ENCODE measurements at regions of chr11 and their contacts with region 1.

Region 1: GRCh38 chr11:13861411-13861810 is 101.1 kb upstream of the SPON1 start:
- DNase-seq: peak; percentile 97
- H3K4me3 ChIP-seq: peak overlapping the region; percentile 35
- H3K27ac ChIP-seq: peak overlapping the region; percentile 89
- H3K4me1 ChIP-seq: peaks cover 77% of the 10 kb centered on the region
- CTCF ChIP-seq: no peak

Region 2: DNA sequence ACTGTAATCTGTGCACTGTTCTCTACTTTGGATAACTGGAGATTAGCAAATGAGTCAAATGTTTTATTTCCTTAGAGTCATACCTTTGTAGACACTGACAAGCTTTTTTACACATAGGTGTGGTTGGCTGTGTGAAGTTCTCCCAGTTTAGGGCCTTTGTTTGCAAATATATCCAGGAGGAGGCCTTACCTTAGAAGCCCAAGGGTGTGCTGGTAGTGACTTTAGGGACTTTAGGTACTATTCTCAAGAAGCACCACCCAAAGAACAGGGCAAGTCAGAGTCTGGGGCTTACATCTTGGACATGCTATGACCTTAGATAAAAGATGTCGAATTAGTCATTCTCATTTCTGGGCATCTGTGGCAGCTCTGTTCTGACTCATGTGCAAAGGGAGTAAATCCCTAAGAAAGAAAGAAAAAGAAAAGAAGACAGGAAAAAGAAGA is 197.8 kb before region 1 on chr11:
- CTCF ChIA-PET with region 1: no interaction called
- POLR2A ChIA-PET with region 1: no interaction called
- intact Hi-C with region 1: no loop called
- DNase-seq: no peak
- H3K4me3 ChIP-seq: no peak overlapping the region
- H3K27ac ChIP-seq: no peak overlapping the region
- H3K4me1 ChIP-seq: peaks cover 14% of the 10 kb centered on the region
- CTCF ChIP-seq: no peak

Region 3: DNA sequence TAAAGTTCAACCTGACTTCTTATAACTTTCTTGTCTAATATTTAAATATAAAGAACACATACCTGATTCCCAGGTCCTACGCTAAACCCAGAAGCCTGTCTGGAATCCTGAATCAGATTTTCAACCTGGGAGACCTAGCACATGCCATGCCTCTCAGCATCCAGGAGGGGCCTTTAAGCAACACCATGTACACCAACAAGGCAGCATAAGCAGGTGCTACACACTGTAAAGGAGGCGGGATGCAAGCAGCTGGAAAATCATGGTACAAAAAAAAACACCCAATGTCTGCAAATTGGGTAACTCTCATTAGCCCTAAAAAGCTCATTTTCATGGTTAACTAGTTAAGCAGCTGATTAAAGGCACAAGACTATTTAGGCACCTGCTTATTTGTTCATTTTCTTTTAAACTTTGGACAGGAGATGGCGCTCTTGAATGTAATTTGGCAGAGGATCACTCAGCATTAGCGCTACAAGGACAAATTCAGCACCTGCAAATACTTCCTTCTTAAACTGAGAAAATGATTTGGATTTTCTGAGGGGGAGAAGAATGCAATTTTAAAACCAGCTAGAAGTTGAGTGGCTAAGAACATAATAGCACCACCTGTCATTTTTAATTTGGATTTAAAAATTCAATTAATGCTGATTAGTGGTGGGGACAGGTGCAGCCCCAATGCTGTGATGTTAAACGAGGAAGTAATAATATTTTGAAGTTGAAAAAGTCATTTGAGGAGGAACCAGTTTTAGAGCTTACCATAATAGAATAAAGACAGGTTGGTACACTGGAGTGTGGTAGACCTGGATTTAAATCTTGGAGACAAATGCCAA is 89.0 kb before region 1 on chr11:
- CTCF ChIA-PET with region 1: no interaction called
- POLR2A ChIA-PET with region 1: no interaction called
- intact Hi-C with region 1: loop called (anchors 2 kb)
- DNase-seq: peak; percentile 90
- H3K4me3 ChIP-seq: no peak overlapping the region
- H3K27ac ChIP-seq: peak overlapping the region; percentile 21
- H3K4me1 ChIP-seq: peaks cover 25% of the 10 kb centered on the region
- CTCF ChIP-seq: peak; percentile 98

Region 4: DNA sequence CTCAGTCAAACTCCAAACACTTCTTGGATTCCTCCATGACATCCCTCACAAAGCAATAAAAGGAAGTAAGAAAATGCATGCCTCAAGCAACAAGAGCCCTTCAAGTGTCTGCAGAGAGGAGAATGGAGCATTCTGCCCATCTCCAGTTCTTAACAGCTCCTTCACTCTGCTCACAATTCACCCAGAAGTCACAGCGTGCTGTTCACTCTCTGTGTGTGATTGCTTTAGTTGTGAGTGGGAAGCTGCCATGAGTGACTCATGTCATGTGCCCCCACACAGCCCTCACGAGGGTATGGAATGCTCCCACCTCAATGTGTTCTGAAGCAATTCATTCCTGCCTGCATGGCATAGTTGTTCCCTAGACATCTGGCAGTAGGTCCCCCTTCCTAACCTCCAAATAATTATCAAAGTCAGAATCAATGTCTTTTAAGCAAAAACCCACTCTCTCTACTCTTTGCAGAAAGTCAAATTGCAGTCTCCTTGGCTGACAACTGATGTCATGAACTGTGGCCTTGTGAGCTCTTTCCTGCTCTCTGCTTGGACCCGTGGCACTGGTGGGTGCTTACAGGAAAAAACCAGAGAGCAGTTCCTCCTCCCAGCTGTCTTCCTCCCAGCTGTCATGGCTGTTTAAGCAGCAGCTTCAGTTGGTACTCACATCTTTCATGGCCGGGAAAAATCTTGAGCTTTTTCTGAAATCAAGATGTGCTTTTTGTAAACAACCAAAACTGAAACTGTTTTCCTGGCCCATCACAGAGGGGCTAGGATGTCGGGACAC is 11.0 kb before region 1 on chr11:
- CTCF ChIA-PET with region 1: interaction called, 5 read pairs
- POLR2A ChIA-PET with region 1: interaction called, 11 read pairs
- intact Hi-C with region 1: no loop called
- DNase-seq: peak; percentile 78
- H3K4me3 ChIP-seq: peak overlapping the region; percentile 12
- H3K27ac ChIP-seq: peak overlapping the region; percentile 35
- H3K4me1 ChIP-seq: peaks cover 66% of the 10 kb centered on the region
- CTCF ChIP-seq: no peak

Region 5: DNA sequence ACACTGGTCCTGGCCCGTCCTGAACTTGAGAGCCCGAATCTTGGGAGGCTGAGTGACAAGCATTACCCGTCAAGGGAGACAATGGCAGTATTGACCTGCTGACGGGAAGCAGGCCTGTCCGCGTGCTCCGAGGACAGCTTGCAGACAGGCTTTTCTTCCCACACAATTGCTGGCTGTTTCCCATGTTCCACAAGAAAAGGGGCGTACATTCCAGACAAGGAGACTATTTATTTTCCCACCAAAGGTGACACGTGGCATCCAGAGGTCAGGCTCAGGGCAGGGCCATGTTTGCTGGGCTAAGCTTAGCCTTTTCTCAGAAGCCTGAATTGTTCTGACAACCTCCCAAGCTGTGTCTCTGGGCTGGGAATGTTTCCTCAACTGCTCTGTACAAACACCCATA is 14.2 kb after region 1 on chr11:
- CTCF ChIA-PET with region 1: interaction called, 3 read pairs
- POLR2A ChIA-PET with region 1: interaction called, 17 read pairs
- intact Hi-C with region 1: no loop called
- DNase-seq: no peak
- H3K4me3 ChIP-seq: no peak overlapping the region
- H3K27ac ChIP-seq: no peak overlapping the region
- H3K4me1 ChIP-seq: peaks cover 46% of the 10 kb centered on the region
- CTCF ChIP-seq: no peak

Region 6: DNA sequence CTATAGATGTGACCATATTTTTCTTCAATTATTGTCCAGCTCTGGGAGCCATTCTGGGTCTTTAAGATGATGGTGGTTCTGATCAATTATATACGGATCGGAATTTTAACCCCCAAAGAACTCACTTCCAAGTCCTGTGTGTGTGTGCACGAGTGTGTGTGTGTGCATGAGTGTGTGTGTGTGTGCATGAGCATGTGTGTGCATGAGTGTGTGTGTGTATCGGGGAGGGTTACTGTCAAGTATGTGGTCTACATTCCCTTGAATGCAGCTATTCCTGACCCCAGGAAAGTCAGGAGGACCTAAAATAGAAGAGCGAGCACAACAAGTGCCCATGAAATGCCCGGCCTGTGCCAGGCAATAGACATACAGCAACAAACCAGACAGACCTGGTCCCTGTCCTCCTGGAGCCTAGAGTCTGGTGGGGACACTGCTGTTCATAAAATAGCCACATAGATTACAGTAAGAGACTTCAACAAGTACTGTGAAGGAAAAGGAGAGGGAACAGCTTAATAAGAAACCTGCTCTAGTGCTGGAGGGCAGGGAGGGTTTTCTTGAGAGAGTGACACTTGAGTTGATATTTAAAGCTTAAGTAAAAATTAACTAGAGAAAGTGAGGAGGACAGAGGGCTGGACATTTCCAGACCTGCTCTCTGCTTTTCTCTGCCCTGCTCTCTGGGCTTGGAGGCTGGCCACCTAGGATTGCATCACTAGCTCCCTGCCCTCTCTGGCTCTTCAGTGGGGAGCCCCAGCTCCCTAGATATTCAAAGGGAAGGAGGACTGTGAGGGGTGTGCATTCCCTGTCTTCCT is 35.0 kb after region 1 on chr11:
- CTCF ChIA-PET with region 1: no interaction called
- POLR2A ChIA-PET with region 1: interaction called, 7 read pairs
- intact Hi-C with region 1: loop called (anchors 2 kb)
- DNase-seq: no peak
- H3K4me3 ChIP-seq: no peak overlapping the region
- H3K27ac ChIP-seq: peak overlapping the region; percentile 92
- H3K4me1 ChIP-seq: peaks cover 70% of the 10 kb centered on the region
- CTCF ChIP-seq: no peak

Measured in OCI-LY7 (cell line).